Caco-2 (cell line): ENCODE measurements at regions of chr15 and their contacts with region 1.

Region 1: DNA sequence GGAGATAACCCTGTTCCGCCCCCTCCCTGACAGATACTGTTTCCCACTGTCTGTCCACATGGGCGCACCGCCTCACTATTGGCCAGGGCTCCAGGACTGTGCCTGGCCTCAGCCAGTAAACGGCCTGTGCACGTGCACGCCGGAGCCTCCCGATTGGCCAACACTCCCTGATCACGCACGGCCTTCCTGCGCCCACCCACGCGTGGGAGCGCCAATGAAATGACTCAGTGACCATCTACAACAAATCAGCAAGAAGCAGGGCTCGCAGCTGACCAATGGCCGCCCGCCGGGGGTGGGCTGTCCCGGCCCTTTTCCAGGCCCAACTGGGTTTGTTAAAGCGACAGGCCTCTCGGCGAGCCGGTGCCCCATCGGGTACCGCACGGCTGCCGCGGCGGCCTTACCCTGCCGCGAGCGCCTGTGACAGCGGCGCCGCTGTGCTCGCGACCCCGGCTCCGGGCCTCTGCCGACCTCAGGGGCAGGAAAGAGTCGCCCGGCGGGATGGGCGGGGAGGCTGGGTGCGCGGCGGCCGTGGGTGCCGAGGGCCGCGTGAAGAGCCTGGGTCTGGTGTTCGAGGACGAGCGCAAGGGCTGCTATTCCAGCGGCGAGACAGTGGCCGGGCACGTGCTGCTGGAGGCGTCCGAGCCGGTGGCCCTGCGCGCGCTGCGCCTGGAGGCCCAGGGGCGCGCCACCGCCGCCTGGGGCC is at the start of gene ARRDC4:
- DNase-seq: peak; percentile 96 to 99
- H3K4me3 ChIP-seq: peak within 1 kb of the TSS; percentile 79
- H3K4me3 Mint-ChIP-seq: peak within 1 kb of the TSS; percentile 58
- H3K27ac Mint-ChIP-seq: peak within 1 kb of the TSS; percentile 20
- H3K4me1 ChIP-seq: no peaks in the 10 kb centered on the region
- H3K4me1 Mint-ChIP-seq: no peaks in the 10 kb centered on the region
- H3K27me3 ChIP-seq: no peaks in the 10 kb centered on the region
- H3K27me3 Mint-ChIP-seq: no peaks in the 10 kb centered on the region
- CTCF ChIP-seq: no peak
- total RNA-seq, gene ARRDC4: 3.2 and 4.1 TPM in 2 replicates

Region 2: DNA sequence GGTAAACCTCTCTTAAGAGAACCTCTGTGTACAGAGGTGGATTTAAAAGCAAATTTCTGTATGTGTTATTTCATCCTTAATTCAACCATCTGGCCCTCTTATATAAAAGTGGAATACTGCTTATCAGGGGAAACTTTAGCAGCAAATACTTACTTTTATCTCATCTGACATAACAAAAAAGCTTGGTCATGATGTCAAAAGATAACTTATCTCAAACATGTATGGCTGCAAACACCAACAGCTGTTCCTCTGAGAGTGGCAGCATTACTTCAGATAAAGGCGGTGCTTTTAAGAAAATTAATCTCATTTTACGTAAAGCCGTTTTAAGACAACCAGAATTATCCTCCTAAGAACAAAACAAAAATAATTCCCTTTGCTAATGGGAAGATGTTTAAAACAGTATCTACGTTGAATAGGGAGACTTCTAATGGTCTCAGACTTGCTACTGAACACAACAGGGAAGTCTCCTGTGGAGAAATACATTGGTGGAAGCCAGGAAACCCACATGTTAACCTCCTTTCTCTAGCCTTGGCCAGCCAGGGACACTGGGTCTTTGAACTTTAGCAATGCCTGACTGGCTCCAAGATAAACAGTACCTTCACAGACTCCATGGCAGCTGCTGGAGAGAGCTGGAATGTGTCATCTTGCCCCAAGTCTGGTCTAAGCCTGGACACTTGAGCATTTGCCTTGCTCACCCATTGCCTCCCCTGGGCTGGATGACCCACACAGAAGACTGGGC is 18.1 kb after region 1 on chr15:
- CTCF ChIA-PET with region 1: no interaction called
- POLR2A ChIA-PET with region 1: no interaction called
- intact Hi-C with region 1: loop called (anchors 1 kb)
- DNase-seq: peak; percentile 5 to 44
- H3K4me3 ChIP-seq: no peak overlapping the region
- H3K4me3 Mint-ChIP-seq: no peak overlapping the region
- H3K27ac Mint-ChIP-seq: peak overlapping the region; percentile 28
- H3K4me1 ChIP-seq: peaks cover 24% of the 10 kb centered on the region
- H3K4me1 Mint-ChIP-seq: peaks cover 7% of the 10 kb centered on the region
- H3K27me3 ChIP-seq: no peaks in the 10 kb centered on the region
- H3K27me3 Mint-ChIP-seq: no peaks in the 10 kb centered on the region
- CTCF ChIP-seq: no peak

Region 3: GRCh38 chr15:98035577-98036010 is 75.1 kb after region 1 on chr15:
- CTCF ChIA-PET with region 1: no interaction called
- POLR2A ChIA-PET with region 1: no interaction called
- intact Hi-C with region 1: no loop called
- DNase-seq: no peak
- H3K4me3 ChIP-seq: no peak overlapping the region
- H3K4me3 Mint-ChIP-seq: no peak overlapping the region
- H3K27ac Mint-ChIP-seq: no peak overlapping the region
- H3K4me1 ChIP-seq: no peaks in the 10 kb centered on the region
- H3K4me1 Mint-ChIP-seq: no peaks in the 10 kb centered on the region
- H3K27me3 ChIP-seq: no peaks in the 10 kb centered on the region
- H3K27me3 Mint-ChIP-seq: no peaks in the 10 kb centered on the region
- CTCF ChIP-seq: no peak